ENCODE measurements at regions of chr3 and their contacts with region 1.

Region 1: DNA sequence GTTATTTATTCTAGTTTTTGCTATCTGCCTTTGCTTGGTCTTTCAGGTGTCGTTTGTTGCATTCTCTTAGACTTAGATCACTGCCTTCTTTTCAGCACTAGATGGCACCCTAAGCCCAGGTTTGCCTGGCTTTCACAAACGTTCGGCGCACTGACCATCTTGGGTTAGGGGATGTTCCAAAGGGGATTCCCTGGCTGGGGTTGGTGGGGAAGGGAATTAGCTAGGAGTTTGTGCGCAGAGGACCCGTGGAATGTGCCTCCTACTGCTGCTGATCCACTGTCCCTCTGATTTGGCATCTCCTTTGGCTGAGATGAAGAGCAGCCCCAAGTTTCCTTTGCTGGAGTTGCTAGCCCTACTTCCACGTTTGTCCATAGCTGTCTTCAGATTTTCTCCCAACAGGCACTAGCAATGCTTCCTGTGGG is 33.9 kb downstream of the PFN2 start:
- DNase-seq: peak; percentile 48
- H3K4me3 ChIP-seq: no peak overlapping the region; a peak in 1 of 4 replicates
- H3K27ac ChIP-seq: no peak overlapping the region
- H3K4me1 ChIP-seq: no peaks in the 10 kb centered on the region
- H3K27me3 ChIP-seq: no peaks in the 10 kb centered on the region
- CTCF ChIP-seq: peak; percentile 63
- EP300 ChIP-seq: no peak
- RAD21 ChIP-seq: peak; percentile 88

Region 2: DNA sequence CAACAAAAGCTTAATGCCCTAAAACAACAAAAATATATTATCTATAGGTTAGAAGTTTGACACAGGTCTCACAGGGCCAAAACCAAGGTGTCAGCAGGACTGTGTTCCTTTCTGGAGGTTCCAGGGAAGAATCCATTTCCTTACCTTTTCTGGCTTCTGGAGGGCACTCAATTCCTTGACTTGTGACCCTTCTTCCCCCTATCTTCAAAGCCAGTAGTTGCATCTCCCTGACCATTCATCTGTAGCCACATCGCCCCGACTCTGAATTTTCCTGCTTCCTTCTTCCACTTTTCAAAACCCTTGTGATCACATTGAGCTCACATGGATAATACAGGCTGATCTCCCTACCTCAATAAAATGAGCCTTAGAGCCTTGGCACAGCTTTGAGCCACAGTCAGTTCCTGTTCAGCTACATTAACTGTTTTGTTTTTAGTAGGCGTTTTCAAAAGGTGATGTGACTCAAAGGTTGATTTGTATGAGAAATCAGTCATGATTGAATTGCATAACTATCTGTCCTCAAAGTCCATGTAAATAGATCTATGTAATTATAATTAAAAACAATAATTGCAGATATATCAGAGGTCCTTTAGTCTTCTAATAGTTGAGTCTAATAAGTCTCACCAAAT is 21.5 kb after region 1 on chr3:
- CTCF ChIA-PET with region 1: interaction called, 14 read pairs
- POLR2A ChIA-PET with region 1: no interaction called
- DNase-seq: no peak
- H3K4me3 ChIP-seq: no peak overlapping the region
- H3K27ac ChIP-seq: no peak overlapping the region
- H3K4me1 ChIP-seq: peaks cover 19 to 20% of the 10 kb centered on the region in 2 experiments; a peak in 3 of 4 replicates
- H3K27me3 ChIP-seq: no peaks in the 10 kb centered on the region
- CTCF ChIP-seq: no peak
- EP300 ChIP-seq: no peak
- RAD21 ChIP-seq: no peak

Region 3: GRCh38 chr3:149969940-149970715 is 33.3 kb after region 1 on chr3:
- CTCF ChIA-PET with region 1: interaction called, 19 read pairs
- POLR2A ChIA-PET with region 1: no interaction called
- DNase-seq: peak; percentile 71
- H3K4me3 ChIP-seq: peak overlapping the region; percentile 76 to 93
- H3K27ac ChIP-seq: peak overlapping the region; percentile 94 to 98
- H3K4me1 ChIP-seq: peaks cover 0 to 15% of the 10 kb centered on the region in 2 experiments; a peak in 2 of 4 replicates
- H3K27me3 ChIP-seq: no peaks in the 10 kb centered on the region
- CTCF ChIP-seq: no peak
- EP300 ChIP-seq: no peak
- RAD21 ChIP-seq: no peak

Region 4: DNA sequence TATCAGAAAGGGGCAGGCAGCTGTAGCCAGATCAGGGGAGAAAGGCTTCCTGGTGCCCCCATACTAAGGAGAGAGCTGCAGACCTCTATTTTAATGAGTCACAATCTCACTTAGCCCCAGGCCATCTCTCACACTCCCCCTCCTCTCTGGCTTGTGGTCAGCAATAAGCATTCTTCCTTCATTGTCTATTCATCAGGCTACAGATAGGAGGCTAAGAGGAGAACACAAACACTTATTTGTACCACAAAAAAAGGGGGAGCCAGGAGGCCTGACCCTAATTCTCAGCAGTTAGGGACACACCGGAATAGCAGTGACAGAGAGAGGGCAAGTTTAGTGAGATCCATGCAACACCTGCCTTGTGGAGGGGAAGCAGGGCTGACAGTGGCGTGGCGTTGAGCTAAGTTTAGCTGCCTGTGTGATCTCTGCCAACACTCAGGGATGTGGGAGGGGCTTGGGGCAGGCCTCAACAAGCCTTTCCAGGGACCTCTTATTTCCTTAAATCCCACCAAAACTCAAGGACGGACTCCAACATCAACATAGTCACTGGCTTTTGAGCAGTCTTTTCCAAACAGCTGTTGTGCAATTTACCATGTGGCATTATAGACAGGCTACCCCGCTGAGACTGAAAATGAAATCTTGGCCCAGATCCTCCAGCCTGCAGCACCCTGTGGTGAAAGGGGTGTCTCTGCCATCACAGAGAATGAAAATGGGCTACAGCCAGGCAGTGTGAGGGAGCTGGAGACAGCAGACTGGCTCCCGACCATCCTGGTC is 279.4 kb after region 1 on chr3:
- CTCF ChIA-PET with region 1: interaction called, 21 read pairs
- POLR2A ChIA-PET with region 1: no interaction called
- DNase-seq: peak; percentile 32
- H3K4me3 ChIP-seq: no peak overlapping the region
- H3K27ac ChIP-seq: no peak overlapping the region
- H3K4me1 ChIP-seq: peaks cover 10 to 20% of the 10 kb centered on the region in 2 experiments; a peak in 3 of 4 replicates
- H3K27me3 ChIP-seq: no peaks in the 10 kb centered on the region
- CTCF ChIP-seq: no peak
- EP300 ChIP-seq: no peak
- RAD21 ChIP-seq: no peak